ENCODE measurements at regions of chr15 and their contacts with region 1.

Region 1: DNA sequence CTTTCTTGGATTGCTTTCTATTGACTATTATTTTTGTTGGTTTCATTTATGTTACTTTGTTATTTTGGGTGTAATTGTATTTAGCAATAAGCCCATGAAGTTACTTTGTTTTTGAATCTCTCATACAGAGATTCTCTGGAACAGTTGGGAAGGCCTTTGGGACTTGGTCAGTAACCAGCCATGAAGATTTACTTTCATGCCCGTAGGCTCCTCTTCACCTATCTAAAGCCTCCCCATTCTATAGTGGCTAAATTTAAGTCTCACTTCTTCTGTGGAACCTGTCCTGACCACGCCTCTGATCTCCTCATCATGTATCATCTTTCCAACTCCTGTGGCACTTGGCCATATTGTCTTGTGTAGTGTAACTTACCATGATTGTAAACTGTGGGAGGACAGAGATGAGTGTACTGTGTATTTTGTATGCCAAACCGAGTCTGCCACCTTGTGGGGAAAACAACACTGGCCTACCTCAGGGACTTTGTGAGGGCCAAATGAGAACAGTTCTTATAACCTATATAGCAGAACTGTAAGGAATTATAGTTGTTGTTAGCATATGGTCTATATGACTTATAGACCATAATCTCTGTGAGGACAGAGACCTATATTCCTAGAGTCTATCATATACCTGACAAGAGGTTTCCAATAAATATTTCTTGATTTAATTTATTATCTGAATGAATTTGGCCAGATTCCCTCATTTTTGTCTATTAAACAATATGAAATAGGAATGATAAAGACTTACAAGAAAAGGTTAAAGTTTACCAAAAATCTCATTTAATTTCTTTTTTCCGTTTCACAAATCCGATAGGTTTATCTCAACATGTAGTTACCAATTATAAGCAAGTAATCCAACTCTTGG is 75.0 kb downstream of the STARD9 start:
- DNase-seq: peak; percentile 36
- ATAC-seq: peak; percentile 96

Region 2: GRCh38 chr15:42581272-42581730 is 69.1 kb before region 1 on chr15:
- intact Hi-C with region 1: loop called (anchors 10 kb)
- DNase-seq: peak; percentile 94
- ATAC-seq: peak; percentile 93